ENCODE measurements at regions of chr18 and their contacts with region 1.

Region 1: GRCh38 chr18:46250084-46250811 is 146.1 kb downstream of the HAUS1 start:
- DNase-seq: peak; percentile 73 to 82 (median 77)
- H3K4me3 ChIP-seq: peak overlapping the region in 1 of 2 donors; percentile 48
- H3K4me3 Mint-ChIP-seq: peak overlapping the region; percentile 80 to 97 (median 91)
- H3K27ac ChIP-seq: peak overlapping the region; percentile 77
- H3K27ac Mint-ChIP-seq: peak overlapping the region; percentile 94 to 99 (median 97)
- H3K4me1 ChIP-seq: peaks cover 39% of the 10 kb centered on the region
- H3K4me1 Mint-ChIP-seq: peaks cover 40 to 50% (median 44%) of the 10 kb centered on the region in 4 donors
- H3K27me3 ChIP-seq: no peaks in the 10 kb centered on the region
- H3K27me3 Mint-ChIP-seq: peaks cover 0 to 2% of the 10 kb centered on the region in 2 donors

Region 2: DNA sequence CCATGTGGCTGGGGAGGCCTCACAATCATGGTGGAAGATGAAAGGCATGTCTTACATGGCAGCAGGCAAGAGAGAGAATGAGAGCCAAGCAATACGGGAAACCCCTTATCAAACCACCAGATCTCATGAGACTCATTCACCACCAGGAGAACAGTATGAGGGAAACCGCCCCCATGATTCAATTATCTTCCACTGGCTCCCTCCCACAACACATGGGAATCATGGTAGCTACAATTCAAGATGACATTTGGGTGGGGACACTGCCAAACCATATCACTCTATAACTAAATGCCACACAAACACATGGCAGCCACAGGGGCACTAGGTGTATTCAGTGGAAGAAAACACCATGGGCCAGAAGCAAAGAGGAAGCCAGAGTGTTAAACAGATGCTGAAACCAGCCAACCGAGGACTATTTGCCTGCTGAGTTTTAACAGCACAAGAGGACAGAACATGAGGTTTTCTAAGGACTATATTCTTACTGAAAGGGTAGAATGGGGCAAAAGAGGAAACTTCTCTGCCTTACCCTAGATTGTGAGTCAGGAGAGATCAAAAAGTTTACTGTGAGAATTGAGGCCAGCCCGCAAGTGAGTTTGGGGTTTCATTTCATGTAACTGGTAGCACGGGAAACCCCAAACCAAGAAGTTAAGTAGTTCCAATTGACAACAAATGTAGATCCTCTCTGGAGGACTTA is 375.6 kb before region 1 on chr18:
- CTCF ChIA-PET with region 1: no interaction called
- POLR2A ChIA-PET with region 1: no interaction called
- intact Hi-C with region 1: no loop called
- DNase-seq: peak; percentile 57 to 77 (median 65)
- H3K4me3 ChIP-seq: peak overlapping the region in 1 of 2 donors; percentile 26
- H3K4me3 Mint-ChIP-seq: peak overlapping the region in 7 of 8 donors; percentile 23 to 74 (median 42)
- H3K27ac ChIP-seq: peak overlapping the region; percentile 29
- H3K27ac Mint-ChIP-seq: peak overlapping the region; percentile 71 to 88 (median 86)
- H3K4me1 ChIP-seq: peaks cover 25% of the 10 kb centered on the region
- H3K4me1 Mint-ChIP-seq: peaks cover 18 to 30% (median 28%) of the 10 kb centered on the region in 4 donors
- H3K27me3 ChIP-seq: no peaks in the 10 kb centered on the region
- H3K27me3 Mint-ChIP-seq: no peaks in the 10 kb centered on the region

Region 3: GRCh38 chr18:46097801-46098615 is 152.2 kb before region 1 on chr18 and contains the start of gene ATP5F1A:
- CTCF ChIA-PET with region 1: interaction called, 4 read pairs
- POLR2A ChIA-PET with region 1: no interaction called
- intact Hi-C with region 1: loop called (anchors 1 kb)
- DNase-seq: peak; percentile 82 to 90 (median 86)
- H3K4me3 ChIP-seq: peak within 1 kb of the TSS; percentile 39 to 95
- H3K4me3 Mint-ChIP-seq: peak within 1 kb of the TSS; percentile 92 to 99 (median 98)
- H3K27ac ChIP-seq: peak within 1 kb of the TSS; percentile 93
- H3K27ac Mint-ChIP-seq: peak within 1 kb of the TSS; percentile 94 to 99 (median 98)
- H3K4me1 ChIP-seq: peaks cover 47% of the 10 kb centered on the region
- H3K4me1 Mint-ChIP-seq: peaks cover 14 to 40% (median 25%) of the 10 kb centered on the region in 4 donors
- H3K27me3 ChIP-seq: no peaks in the 10 kb centered on the region
- H3K27me3 Mint-ChIP-seq: no peaks in the 10 kb centered on the region
- total RNA-seq, gene ATP5F1A: 212 to 225 TPM

Region 4: GRCh38 chr18:46213295-46213694 is 37.0 kb before region 1 on chr18:
- CTCF ChIA-PET with region 1: interaction called, 5 read pairs
- POLR2A ChIA-PET with region 1: no interaction called
- intact Hi-C with region 1: loop called (anchors 1 kb)
- DNase-seq: peak in 4 of 5 donors; percentile 35 to 54 (median 40)
- H3K4me3 ChIP-seq: no peak overlapping the region
- H3K4me3 Mint-ChIP-seq: peak overlapping the region in 6 of 8 donors; percentile 50 to 75 (median 58)
- H3K27ac ChIP-seq: no peak overlapping the region
- H3K27ac Mint-ChIP-seq: peak overlapping the region in 5 of 7 donors; percentile 37 to 81 (median 65)
- H3K4me1 ChIP-seq: peaks cover 73% of the 10 kb centered on the region
- H3K4me1 Mint-ChIP-seq: peaks cover 55 to 96% (median 80%) of the 10 kb centered on the region in 4 donors
- H3K27me3 ChIP-seq: no peaks in the 10 kb centered on the region
- H3K27me3 Mint-ChIP-seq: no peaks in the 10 kb centered on the region

Region 5: GRCh38 chr18:46220116-46220515 is 30.1 kb before region 1 on chr18:
- CTCF ChIA-PET with region 1: interaction called, 3 read pairs
- POLR2A ChIA-PET with region 1: interaction called, 4 read pairs
- intact Hi-C with region 1: loop called (anchors 2 kb)
- DNase-seq: no peak
- H3K4me3 ChIP-seq: no peak overlapping the region
- H3K4me3 Mint-ChIP-seq: no peak overlapping the region
- H3K27ac ChIP-seq: no peak overlapping the region
- H3K27ac Mint-ChIP-seq: peak overlapping the region in 2 of 7 donors; percentile 15 to 43
- H3K4me1 ChIP-seq: peaks cover 60% of the 10 kb centered on the region
- H3K4me1 Mint-ChIP-seq: peaks cover 49 to 87% (median 78%) of the 10 kb centered on the region in 4 donors
- H3K27me3 ChIP-seq: no peaks in the 10 kb centered on the region
- H3K27me3 Mint-ChIP-seq: no peaks in the 10 kb centered on the region

Region 6: DNA sequence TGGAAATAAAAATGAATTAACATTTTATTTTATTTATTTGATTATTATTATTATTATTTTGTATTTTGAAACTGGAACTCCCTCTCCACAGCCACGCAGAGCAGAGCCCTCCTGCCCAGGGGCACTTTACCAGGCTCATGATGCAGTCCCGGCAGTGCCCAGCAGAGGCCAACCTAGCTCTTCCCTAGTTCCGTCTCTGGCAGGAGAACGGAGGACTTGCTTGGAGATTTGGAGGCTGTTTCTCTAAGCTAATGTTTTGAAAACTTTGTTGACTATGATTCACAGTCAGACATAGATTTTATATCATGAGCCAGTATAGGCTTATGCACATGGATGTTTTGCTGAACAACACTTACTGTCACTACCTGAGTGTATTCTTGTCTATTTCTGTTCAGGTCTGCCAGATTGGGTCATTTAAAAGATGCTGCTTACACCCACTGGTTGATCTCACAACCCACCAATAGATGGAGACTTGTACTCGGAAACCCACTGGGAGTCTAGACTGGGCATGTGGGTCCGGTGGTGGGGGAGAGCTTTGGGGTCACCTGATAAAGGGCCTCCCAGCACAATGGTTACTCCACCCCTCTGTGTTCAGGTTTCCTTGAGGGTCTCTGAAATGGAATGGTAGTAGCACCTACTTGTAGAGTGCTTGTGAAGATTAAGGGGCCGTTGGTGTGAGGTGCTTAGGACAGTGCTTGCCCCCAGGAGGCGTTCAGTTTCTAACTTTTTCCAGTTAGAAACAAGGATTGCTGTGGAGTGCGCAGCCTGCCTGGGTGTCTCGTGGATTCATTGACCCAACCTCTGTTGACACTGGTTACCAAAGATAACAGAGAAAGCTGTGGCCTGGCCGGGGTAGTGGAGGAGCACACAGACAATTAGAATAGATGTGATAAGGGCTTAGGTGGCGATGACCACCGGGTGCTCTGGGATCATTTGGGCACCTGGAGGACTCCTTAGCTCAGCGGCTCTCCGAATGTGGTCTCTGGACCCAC is 31.2 kb after region 1 on chr18:
- CTCF ChIA-PET with region 1: interaction called, 11 read pairs
- POLR2A ChIA-PET with region 1: no interaction called
- intact Hi-C with region 1: no loop called
- DNase-seq: peak; percentile 23 to 56 (median 42)
- H3K4me3 ChIP-seq: no peak overlapping the region
- H3K4me3 Mint-ChIP-seq: no peak overlapping the region
- H3K27ac ChIP-seq: no peak overlapping the region
- H3K27ac Mint-ChIP-seq: no peak overlapping the region
- H3K4me1 ChIP-seq: peaks cover 8% of the 10 kb centered on the region
- H3K4me1 Mint-ChIP-seq: peaks cover 9 to 23% (median 14%) of the 10 kb centered on the region in 4 donors
- H3K27me3 ChIP-seq: no peaks in the 10 kb centered on the region
- H3K27me3 Mint-ChIP-seq: no peaks in the 10 kb centered on the region